Panc1 (cell line): ENCODE measurements at regions of chrX and their contacts with region 1.

Region 1: DNA sequence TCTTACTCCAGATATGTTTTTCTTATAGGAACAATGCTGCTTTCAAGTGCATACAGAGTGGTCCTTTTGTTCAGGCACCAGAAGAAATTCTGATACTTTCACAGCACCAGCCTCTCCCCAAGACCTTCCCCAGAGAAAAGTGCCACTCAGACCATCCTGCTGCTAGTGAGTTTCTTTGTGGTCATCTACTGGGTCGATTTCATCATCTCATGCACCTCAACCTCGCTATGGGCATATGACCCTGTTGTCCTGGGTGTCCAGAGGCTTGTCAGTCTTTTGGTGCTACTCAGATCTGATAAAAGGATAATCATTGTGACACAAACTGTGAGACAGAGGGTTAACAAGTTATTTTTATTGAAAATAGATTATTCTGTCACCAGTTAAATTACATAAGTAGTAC is 39.5 kb downstream of the WDR13 start:
- DNase-seq: no peak
- ATAC-seq: no peak
- H3K4me3 ChIP-seq: peak overlapping the region in 1 of 2 experiments; percentile 6; a peak in 1 of 4 replicates
- H3K27ac ChIP-seq: no peak overlapping the region
- H3K4me1 ChIP-seq: peaks cover 3% of the 10 kb centered on the region; the same call in 1 of the 2 replicates
- H3K27me3 ChIP-seq: no peaks in the 10 kb centered on the region
- CTCF ChIP-seq: no peak

Region 2: GRCh38 chrX:48665991-48666390 is 29.2 kb after region 1 on chrX:
- CTCF ChIA-PET with region 1: no interaction called
- POLR2A ChIA-PET with region 1: interaction called, 22 read pairs
- in situ Hi-C with region 1: no loop called
- intact Hi-C with region 1: no loop called
- DNase-seq: no peak
- ATAC-seq: 0 out of 2 replicates have a peak, but pooled peaks have one; percentile 63
- H3K4me3 ChIP-seq: no peak overlapping the region
- H3K27ac ChIP-seq: no peak overlapping the region
- H3K4me1 ChIP-seq: no peaks in the 10 kb centered on the region
- H3K27me3 ChIP-seq: no peaks in the 10 kb centered on the region
- CTCF ChIP-seq: no peak

Region 3: DNA sequence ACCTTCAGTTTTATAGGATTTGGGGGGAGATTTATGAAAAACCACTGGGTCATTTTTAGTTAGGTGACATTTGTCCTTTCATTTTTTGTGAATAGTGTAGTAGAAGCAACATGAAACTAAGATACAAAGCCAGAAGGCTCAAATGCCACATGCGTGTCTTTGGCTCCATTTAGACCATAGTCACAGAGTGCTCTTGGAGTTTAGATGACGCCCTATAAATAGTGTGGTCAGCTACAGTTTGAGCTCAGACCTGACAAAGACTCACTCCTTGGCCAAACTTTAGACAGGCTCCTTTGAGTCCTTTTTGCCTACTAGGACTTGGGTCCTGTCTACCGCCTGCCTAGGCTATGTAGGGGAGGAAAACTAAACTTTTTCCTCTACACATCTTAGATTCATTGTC is 1075.8 kb after region 1 on chrX:
- CTCF ChIA-PET with region 1: no interaction called
- POLR2A ChIA-PET with region 1: no interaction called
- in situ Hi-C with region 1: no loop called
- intact Hi-C with region 1: no loop called
- DNase-seq: no peak
- ATAC-seq: no peak
- H3K4me3 ChIP-seq: no peak overlapping the region
- H3K27ac ChIP-seq: no peak overlapping the region
- H3K4me1 ChIP-seq: no peaks in the 10 kb centered on the region
- H3K27me3 ChIP-seq: no peaks in the 10 kb centered on the region; the same call in 1 of the 2 replicates
- CTCF ChIP-seq: no peak